ENCODE measurements at regions of chr1 and their contacts with region 1.

Region 1: GRCh38 chr1:65459397-65459768 is 38.9 kb downstream of the LEPR start:
- DNase-seq: peak; percentile 57
- H3K4me3 Mint-ChIP-seq: no peak overlapping the region
- H3K27ac Mint-ChIP-seq: peak overlapping the region; percentile 31
- H3K4me1 Mint-ChIP-seq: peaks cover 16% of the 10 kb centered on the region
- H3K27me3 Mint-ChIP-seq: no peaks in the 10 kb centered on the region
- CTCF ChIP-seq: peak; percentile 54

Region 2: DNA sequence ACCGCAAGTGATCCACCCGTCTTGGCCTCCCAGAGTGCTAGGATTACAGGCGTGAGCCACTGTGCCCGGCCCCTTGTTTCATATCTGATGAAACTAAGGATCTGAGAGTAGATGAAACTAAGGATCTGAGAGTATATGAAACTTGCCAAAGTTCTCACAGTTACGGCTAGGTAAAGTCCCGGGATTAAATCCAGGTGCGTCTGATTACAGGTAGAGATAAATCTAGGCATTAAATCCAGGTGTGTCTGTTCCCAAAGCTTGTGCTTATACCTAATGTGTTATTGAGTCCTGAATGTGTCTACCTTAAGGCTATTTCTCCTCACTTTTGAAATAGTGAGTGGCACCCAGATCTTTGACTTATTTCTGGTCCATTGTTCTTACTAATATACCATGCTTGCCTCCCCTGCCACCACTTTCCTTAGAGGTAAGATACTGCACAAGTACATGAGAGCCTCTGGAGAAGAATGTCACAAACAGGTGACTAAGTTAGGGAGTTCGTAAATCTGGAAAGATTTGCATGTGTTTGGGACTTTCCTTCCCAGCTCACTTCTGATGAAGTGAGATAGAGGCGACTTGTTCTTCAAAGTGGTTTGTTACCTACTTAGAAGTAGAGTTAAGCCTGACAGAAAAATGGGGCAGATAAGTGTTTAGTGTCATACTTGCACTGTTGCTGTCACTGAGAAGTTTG is 244.9 kb before region 1 on chr1:
- CTCF ChIA-PET with region 1: interaction called, 12 read pairs
- POLR2A ChIA-PET with region 1: no interaction called
- intact Hi-C with region 1: no loop called
- DNase-seq: no peak
- H3K4me3 Mint-ChIP-seq: no peak overlapping the region
- H3K27ac Mint-ChIP-seq: no peak overlapping the region
- H3K4me1 Mint-ChIP-seq: no peaks in the 10 kb centered on the region
- H3K27me3 Mint-ChIP-seq: no peaks in the 10 kb centered on the region
- CTCF ChIP-seq: no peak

Region 3: GRCh38 chr1:65254319-65255034 is 204.9 kb before region 1 on chr1:
- CTCF ChIA-PET with region 1: interaction called, 10 read pairs
- POLR2A ChIA-PET with region 1: interaction called, 3 read pairs
- intact Hi-C with region 1: no loop called
- DNase-seq: peak; percentile 74
- H3K4me3 Mint-ChIP-seq: peak overlapping the region; percentile 74
- H3K27ac Mint-ChIP-seq: peak overlapping the region; percentile 7
- H3K4me1 Mint-ChIP-seq: peaks cover 18% of the 10 kb centered on the region
- H3K27me3 Mint-ChIP-seq: no peaks in the 10 kb centered on the region
- CTCF ChIP-seq: no peak

Region 4: DNA sequence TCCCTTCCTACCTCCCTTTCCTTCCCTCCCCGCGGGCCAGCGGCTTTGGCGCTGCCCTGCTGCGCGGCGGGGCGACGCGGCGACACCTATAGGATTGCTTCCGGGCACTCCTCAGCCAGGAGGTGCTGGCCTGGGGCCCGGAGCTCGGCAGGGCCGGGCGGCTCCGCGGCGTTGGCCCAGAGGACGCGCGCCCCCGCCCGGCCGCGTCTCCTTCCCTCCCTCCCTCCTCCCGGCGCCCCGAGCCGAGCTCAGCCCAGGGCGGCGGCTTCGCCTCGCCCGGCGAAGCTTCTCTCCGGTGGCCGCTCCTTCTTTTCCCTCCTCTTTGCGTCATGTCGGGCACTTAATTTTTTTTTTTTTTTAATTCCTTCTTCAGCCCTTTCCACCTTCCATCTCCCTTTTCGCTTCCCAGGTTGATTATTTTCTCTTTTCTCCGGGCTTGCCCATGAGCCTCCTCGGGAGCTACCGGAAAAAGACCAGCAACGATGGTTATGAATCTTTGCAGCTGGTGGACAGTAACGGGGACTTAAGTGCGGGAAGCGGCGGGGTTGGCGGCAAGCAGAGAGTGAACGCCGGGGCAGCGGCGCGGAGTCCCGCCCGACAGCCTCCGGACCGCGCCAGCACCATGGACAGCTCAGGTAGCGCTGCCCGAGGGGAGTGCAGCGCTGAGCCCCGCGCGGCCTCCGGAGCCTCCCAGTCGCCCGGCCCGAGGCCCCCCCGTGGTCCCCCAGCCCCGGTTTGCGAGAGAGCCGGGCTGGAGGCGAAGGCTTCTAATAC is 149.9 kb before region 1 on chr1 and contains the start of gene DNAJC6:
- CTCF ChIA-PET with region 1: interaction called, 17 read pairs
- POLR2A ChIA-PET with region 1: no interaction called
- intact Hi-C with region 1: no loop called
- DNase-seq: peak; percentile 69
- H3K4me3 Mint-ChIP-seq: peak within 1 kb of the TSS; percentile 82
- H3K27ac Mint-ChIP-seq: no peak within 1 kb of the TSS
- H3K4me1 Mint-ChIP-seq: no peaks in the 10 kb centered on the region
- H3K27me3 Mint-ChIP-seq: no peaks in the 10 kb centered on the region
- CTCF ChIP-seq: no peak
- total RNA-seq, gene DNAJC6: 7.9 and 8.4 TPM in 2 replicates

Region 5: DNA sequence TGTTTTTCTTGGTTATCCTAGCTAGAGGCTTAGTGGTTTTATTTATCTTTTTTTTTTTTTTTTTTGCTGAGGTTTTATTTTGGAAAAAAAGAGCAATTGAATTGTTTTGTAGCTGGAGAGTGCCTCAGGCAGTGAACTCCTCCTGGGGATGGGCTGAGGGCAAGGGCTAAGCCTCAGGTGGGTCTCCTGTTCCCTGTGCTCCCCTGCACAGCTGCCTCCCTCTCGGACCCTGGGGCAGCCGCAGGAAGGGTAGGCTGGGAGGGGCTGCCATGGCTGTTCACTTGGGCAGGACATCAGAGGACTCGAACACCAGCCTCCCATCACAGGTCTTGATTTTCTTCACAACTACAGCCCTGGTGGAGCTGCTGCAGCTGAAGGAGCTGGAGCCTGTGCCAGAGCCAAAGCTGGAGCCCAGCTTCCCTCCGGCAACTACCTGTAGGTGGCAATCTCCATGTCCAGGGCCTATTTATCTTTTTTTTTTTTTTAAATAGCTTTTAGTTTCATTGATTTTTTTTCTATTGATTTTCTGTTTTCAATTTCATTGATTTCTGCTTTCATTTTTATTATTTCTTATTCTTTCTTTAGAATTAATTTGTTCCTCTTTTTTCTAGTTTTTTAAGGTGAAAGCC is 10.1 kb before region 1 on chr1:
- CTCF ChIA-PET with region 1: interaction called, 21 read pairs
- POLR2A ChIA-PET with region 1: no interaction called
- intact Hi-C with region 1: no loop called
- DNase-seq: no peak
- H3K4me3 Mint-ChIP-seq: no peak overlapping the region
- H3K27ac Mint-ChIP-seq: no peak overlapping the region
- H3K4me1 Mint-ChIP-seq: no peaks in the 10 kb centered on the region
- H3K27me3 Mint-ChIP-seq: no peaks in the 10 kb centered on the region
- CTCF ChIP-seq: no peak